Activated CD4-positive, alpha-beta memory T cell treated with anti-CD3 and anti-CD28 coated beads for 36 hours (primary cell): ENCODE measurements at regions of chr18 and their contacts with region 1.

Region 1: DNA sequence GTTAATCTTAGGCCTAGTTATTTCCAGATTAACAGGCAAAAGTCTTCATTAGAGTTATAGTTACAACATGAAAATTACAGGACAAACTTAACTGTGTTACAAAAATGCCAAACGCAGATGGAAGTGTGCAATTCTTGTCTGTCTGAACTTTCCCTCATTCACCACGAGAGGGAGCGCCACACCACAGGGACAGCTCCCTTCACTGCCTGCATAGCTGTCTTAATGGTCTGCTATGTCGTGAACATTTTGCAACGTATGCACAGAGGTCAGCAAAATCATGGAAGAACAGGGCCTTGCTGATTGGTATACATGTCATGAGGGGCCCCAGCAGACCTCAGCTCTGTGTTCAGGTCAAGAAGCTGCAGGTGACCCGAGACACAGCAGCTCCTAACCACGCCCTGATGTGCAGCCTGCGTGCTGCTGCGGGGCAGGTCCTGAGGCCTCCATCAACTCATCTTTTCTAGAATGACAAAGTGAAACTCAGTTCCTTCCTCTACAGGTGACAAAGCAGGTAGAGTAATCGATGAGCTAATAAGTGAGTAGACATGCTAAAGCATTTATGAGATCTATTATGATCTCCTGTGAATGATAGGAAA is 78.8 kb upstream of the ATP8B1 start:
- DNase-seq: peak; percentile 64
- H3K4me3 Mint-ChIP-seq: no peak overlapping the region
- H3K27ac Mint-ChIP-seq: no peak overlapping the region
- H3K4me1 Mint-ChIP-seq: no peaks in the 10 kb centered on the region
- H3K27me3 Mint-ChIP-seq: peaks cover 12% of the 10 kb centered on the region

Region 2: DNA sequence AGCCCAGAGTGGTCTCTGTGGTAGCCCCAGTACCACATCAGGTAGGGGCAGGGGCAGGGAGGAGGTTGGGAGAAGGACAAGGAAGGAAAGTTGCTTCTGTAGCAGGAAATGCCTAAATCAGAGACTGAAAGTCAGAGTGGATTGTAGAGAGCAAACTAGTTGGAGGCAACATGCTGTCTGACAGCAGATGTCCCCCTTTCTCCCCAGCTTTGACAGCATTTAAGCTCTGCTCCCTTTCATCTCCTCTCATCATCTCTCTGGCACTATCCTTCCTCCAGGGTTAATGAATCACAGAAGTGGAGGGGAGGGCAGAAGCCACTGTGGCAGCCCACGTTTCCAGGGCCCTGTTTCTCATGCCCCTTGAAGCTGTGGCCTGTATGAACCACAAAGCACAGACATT is 684.7 kb before region 1 on chr18:
- CTCF ChIA-PET with region 1: no interaction called
- POLR2A ChIA-PET with region 1: no interaction called
- intact Hi-C with region 1: no loop called
- DNase-seq: no peak
- H3K4me3 Mint-ChIP-seq: no peak overlapping the region
- H3K27ac Mint-ChIP-seq: no peak overlapping the region
- H3K4me1 Mint-ChIP-seq: no peaks in the 10 kb centered on the region
- H3K27me3 Mint-ChIP-seq: no peaks in the 10 kb centered on the region

Region 3: GRCh38 chr18:57863706-57864105 is 18.2 kb before region 1 on chr18:
- CTCF ChIA-PET with region 1: interaction called, 10 read pairs
- POLR2A ChIA-PET with region 1: no interaction called
- intact Hi-C with region 1: no loop called
- DNase-seq: no peak
- H3K4me3 Mint-ChIP-seq: no peak overlapping the region
- H3K27ac Mint-ChIP-seq: no peak overlapping the region
- H3K4me1 Mint-ChIP-seq: no peaks in the 10 kb centered on the region
- H3K27me3 Mint-ChIP-seq: peaks cover 14% of the 10 kb centered on the region

Region 4: GRCh38 chr18:58043491-58044379 is 161.8 kb after region 1 on chr18 and contains the start of gene NEDD4L:
- CTCF ChIA-PET with region 1: interaction called, 5 read pairs
- POLR2A ChIA-PET with region 1: no interaction called
- intact Hi-C with region 1: loop called (anchors 5 kb)
- DNase-seq: peak; percentile 89
- H3K4me3 Mint-ChIP-seq: peak within 1 kb of the TSS; percentile 86
- H3K27ac Mint-ChIP-seq: peak within 1 kb of the TSS; percentile 26
- H3K4me1 Mint-ChIP-seq: peaks cover 20% of the 10 kb centered on the region
- H3K27me3 Mint-ChIP-seq: peaks cover 25% of the 10 kb centered on the region
- total RNA-seq, gene NEDD4L: 3.4 to 3.8 TPM

Region 5: GRCh38 chr18:58117786-58118403 is 236.0 kb after region 1 on chr18:
- CTCF ChIA-PET with region 1: interaction called, 33 read pairs
- POLR2A ChIA-PET with region 1: interaction called, 4 read pairs
- intact Hi-C with region 1: no loop called
- DNase-seq: no peak
- H3K4me3 Mint-ChIP-seq: no peak overlapping the region
- H3K27ac Mint-ChIP-seq: no peak overlapping the region
- H3K4me1 Mint-ChIP-seq: peaks cover 3% of the 10 kb centered on the region
- H3K27me3 Mint-ChIP-seq: no peaks in the 10 kb centered on the region

Region 6: GRCh38 chr18:58135701-58136331 is 253.9 kb after region 1 on chr18:
- CTCF ChIA-PET with region 1: interaction called, 14 read pairs
- POLR2A ChIA-PET with region 1: no interaction called
- intact Hi-C with region 1: loop called (anchors 5 kb)
- DNase-seq: peak; percentile 69
- H3K4me3 Mint-ChIP-seq: no peak overlapping the region
- H3K27ac Mint-ChIP-seq: no peak overlapping the region
- H3K4me1 Mint-ChIP-seq: peaks cover 9% of the 10 kb centered on the region
- H3K27me3 Mint-ChIP-seq: peaks cover 14% of the 10 kb centered on the region

Region 7: DNA sequence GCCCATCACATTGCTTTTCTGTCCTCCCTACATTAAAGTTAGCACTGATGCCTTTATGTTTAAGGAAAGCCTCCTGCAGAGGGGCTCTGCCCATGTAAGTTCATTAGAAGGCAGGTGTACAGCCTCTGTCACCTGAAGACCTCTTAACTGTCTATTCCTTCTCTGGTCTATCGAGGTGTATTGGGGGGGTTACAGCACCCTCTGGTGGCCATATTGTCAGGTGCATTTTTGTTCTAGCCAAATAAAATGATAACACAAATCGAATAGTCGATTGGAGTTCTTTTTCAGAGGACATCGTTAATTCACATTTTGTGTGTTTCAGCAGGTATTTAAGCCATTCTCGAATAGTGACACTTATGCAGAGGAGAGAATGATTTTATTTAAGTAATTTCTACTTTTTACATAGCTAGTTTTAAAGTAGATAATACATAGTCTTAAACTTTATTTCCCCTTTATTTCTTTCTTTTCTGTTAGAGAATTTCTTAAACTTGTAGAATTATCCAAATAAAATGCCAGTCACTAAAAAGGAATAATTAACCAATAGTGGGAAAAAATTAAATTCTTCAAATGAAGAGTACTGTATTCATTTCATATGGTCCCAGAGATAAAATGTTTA is 298.9 kb after region 1 on chr18:
- CTCF ChIA-PET with region 1: interaction called, 6 read pairs
- POLR2A ChIA-PET with region 1: no interaction called
- intact Hi-C with region 1: loop called (anchors 2 kb)
- DNase-seq: peak; percentile 71
- H3K4me3 Mint-ChIP-seq: no peak overlapping the region
- H3K27ac Mint-ChIP-seq: no peak overlapping the region
- H3K4me1 Mint-ChIP-seq: no peaks in the 10 kb centered on the region
- H3K27me3 Mint-ChIP-seq: peaks cover 2% of the 10 kb centered on the region